GM12878 (cell line): ENCODE measurements at regions of chr14 and their contacts with region 1.

Region 1: DNA sequence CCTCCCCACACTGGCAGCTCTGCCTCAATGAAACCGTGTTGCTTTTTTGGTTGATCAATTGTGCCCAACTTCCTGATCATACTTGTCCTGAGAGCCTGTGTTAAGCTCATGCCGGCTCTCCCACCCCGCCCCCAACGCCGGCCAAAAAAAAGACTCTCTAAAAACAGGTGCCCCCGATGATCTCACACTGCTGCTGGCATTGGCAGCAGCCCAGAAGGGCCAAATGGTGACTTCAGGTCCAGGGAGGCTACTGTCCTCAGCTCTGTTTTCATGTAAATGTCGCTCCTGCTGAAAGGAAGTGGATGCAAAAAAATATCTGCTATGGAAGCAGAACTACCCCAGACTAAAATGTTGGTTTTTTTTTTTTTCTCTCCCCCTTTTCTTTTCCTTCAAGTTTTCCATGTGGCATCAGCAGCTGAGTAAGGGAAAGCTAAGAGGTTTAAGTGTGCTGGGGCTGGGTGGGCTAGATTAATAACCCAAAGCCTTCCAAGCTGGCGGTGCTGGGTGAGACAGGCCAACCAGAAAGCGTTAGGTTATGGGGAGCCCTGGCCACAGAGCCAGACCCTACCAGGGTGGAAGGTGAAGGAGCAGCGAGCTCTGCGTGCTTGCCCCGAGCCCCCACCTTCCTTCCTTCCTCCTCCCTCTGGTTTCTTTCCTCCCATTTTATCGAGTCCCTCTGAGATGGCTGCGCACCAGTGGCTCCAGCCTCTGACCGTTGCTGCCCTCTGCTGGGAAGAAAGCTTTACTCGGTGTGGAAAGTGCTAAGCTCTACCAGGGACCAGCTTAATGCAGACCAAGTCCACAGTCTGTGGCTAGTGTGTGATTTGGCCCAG is 396.1 kb downstream of the NRXN3 start:
- DNase-seq: peak; percentile 25
- ATAC-seq: peak; percentile 100
- H3K4me3 ChIP-seq: no peak overlapping the region
- H3K27ac ChIP-seq: no peak overlapping the region
- H3K4me1 ChIP-seq: no peaks in the 10 kb centered on the region
- H3K27me3 ChIP-seq: no peaks in the 10 kb centered on the region
- CTCF ChIP-seq: peak; percentile 77 to 84 (median 84)
- EP300 ChIP-seq: no peak
- POLR2A ChIP-seq: no peak
- RAD21 ChIP-seq: peak; percentile 88

Region 2: DNA sequence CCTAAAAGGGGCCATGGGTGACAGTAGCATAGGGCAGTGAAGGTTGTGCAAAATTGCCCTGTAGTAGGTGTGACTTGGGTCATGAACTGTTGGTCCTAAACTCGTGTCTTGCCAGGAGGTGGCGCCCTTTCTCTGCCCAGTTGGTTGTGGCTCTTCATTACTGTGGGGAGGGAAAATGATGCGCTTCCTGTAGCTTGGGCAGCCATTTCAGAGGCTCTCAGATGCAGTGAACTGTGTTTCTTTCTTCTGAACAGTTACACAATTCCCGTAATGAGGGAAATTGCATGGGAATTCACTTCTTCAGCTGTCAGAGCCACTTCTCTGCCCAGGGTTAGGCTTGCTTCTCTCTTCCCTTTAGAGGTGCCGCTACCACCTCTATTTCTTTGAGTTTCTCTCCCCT is 544.2 kb before region 1 on chr14:
- CTCF ChIA-PET with region 1: interaction called, 9 read pairs
- POLR2A ChIA-PET with region 1: no interaction called
- RAD21 ChIA-PET with region 1: interaction called, 15 read pairs
- SMC1A ChIA-PET with region 1: interaction called, 7 read pairs
- in situ Hi-C with region 1: no loop called
- intact Hi-C with region 1: loop called (anchors 2 kb)
- DNase-seq: peak; percentile 25
- ATAC-seq: peak; percentile 95
- H3K4me3 ChIP-seq: no peak overlapping the region
- H3K27ac ChIP-seq: no peak overlapping the region
- H3K4me1 ChIP-seq: no peaks in the 10 kb centered on the region
- H3K27me3 ChIP-seq: no peaks in the 10 kb centered on the region; a peak in 1 of 4 replicates
- CTCF ChIP-seq: peak; percentile 49 to 60 (median 53)
- EP300 ChIP-seq: no peak
- POLR2A ChIP-seq: no peak
- RAD21 ChIP-seq: peak; percentile 72

Region 3: DNA sequence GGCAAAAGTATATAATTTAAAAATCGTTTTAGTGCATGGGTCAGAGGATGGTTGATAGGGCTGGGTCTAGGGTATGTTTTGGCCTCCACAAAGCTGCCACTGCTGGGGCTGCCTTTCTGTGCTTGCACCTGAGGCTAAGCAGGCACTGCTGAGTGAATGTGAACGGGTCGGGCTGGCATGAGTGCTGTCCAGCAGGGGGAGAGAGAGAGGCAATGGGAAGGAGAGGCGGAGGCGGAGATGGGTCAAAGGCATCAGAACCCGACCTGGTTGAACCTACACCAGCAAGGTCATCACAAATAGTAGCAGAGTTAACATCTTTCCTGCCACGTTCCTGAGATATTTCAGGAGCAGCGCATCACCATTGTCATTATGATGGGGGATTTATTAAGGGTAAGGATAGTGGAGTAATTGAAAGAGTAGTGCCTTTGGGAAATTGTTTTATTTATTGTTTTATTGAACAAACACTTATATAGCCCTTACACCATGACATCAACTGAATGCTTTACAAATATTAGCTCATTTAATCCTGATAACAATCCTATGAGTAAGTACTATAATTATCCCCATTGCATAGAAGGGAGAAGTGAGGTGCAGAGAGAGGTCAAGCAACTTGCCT is 401.9 kb before region 1 on chr14:
- CTCF ChIA-PET with region 1: interaction called, 3 read pairs
- POLR2A ChIA-PET with region 1: no interaction called
- RAD21 ChIA-PET with region 1: no interaction called
- SMC1A ChIA-PET with region 1: no interaction called
- in situ Hi-C with region 1: no loop called
- intact Hi-C with region 1: loop called (anchors 10 kb)
- DNase-seq: no peak
- ATAC-seq: peak; percentile 85
- H3K4me3 ChIP-seq: no peak overlapping the region
- H3K27ac ChIP-seq: no peak overlapping the region
- H3K4me1 ChIP-seq: no peaks in the 10 kb centered on the region
- H3K27me3 ChIP-seq: peaks cover 2 to 3% of the 10 kb centered on the region in 2 experiments; a peak in 2 of 4 replicates
- CTCF ChIP-seq: peak; percentile 45 to 79 (median 71)
- EP300 ChIP-seq: no peak
- POLR2A ChIP-seq: no peak
- RAD21 ChIP-seq: peak; percentile 44

Region 4: GRCh38 chr14:78403278-78403815 is 162.9 kb before region 1 on chr14:
- CTCF ChIA-PET with region 1: no interaction called
- POLR2A ChIA-PET with region 1: no interaction called
- RAD21 ChIA-PET with region 1: no interaction called
- SMC1A ChIA-PET with region 1: no interaction called
- in situ Hi-C with region 1: no loop called
- intact Hi-C with region 1: no loop called
- DNase-seq: peak; percentile 83
- ATAC-seq: peak; percentile 82
- H3K4me3 ChIP-seq: peak overlapping the region; percentile 70
- H3K27ac ChIP-seq: no peak overlapping the region; the same call in 1 of the 2 replicates
- H3K4me1 ChIP-seq: no peaks in the 10 kb centered on the region
- H3K27me3 ChIP-seq: no peaks in the 10 kb centered on the region
- CTCF ChIP-seq: no peak
- EP300 ChIP-seq: no peak
- POLR2A ChIP-seq: no peak
- RAD21 ChIP-seq: peak; percentile 7; the same call in 1 of the 2 replicates

Region 5: DNA sequence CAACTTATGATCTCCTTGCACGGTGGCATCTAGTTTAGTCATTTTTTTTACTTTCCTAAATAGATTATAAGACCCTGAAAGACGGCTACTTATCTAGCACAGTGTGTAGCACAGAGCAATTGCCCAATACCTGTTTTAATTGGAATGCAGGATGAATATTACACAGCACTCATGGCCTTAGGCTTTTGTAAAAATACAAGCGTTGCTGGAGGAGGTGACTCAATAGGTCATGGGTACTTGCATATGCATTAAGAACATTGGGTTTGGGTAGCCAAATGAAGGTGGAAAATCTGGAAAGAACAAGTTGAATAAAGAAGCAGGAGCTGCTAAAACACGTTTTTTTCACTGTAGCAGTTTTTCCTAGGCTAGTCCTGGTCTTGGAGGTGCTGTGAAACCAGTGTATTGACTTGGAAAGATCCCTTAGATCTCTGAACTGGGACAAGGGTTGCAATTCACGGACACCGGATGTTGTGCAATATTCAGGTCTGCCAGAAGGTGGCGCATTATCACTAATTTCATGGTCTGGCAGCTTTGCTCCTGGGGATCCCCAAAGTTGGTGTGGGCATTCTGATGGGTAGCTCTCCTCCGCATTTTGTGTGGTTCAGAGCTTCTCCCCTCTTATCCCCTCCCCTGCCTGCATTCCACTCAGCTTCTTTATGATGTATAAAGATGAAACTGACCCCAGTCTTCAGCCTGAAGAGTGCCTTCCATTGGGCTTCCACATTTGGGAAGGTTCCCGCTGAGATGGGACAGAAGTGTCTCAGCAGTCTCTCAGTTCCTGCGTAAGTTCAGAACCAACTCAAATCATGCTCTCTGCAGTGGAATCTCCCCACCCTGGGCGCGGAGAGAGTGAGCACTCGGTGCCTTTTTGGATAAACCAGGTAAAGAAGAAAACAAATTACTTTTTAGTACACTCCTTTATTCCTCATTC is 117.8 kb before region 1 on chr14:
- CTCF ChIA-PET with region 1: interaction called, 39 read pairs
- POLR2A ChIA-PET with region 1: no interaction called
- RAD21 ChIA-PET with region 1: interaction called, 14 read pairs
- SMC1A ChIA-PET with region 1: interaction called, 12 read pairs
- in situ Hi-C with region 1: loop called (anchors 5 kb)
- intact Hi-C with region 1: loop called (anchors 1 kb)
- DNase-seq: peak; percentile 45
- ATAC-seq: peak; percentile 87
- H3K4me3 ChIP-seq: no peak overlapping the region
- H3K27ac ChIP-seq: no peak overlapping the region
- H3K4me1 ChIP-seq: peaks cover 5% of the 10 kb centered on the region
- H3K27me3 ChIP-seq: no peaks in the 10 kb centered on the region
- CTCF ChIP-seq: peak; percentile 68 to 91 (median 89)
- EP300 ChIP-seq: no peak
- POLR2A ChIP-seq: no peak
- RAD21 ChIP-seq: peak; percentile 73

Region 6: GRCh38 chr14:78543433-78543832 is 22.8 kb before region 1 on chr14:
- CTCF ChIA-PET with region 1: interaction called, 11 read pairs
- POLR2A ChIA-PET with region 1: no interaction called
- RAD21 ChIA-PET with region 1: no interaction called
- SMC1A ChIA-PET with region 1: no interaction called
- in situ Hi-C with region 1: no loop called
- intact Hi-C with region 1: no loop called
- DNase-seq: no peak
- ATAC-seq: no peak
- H3K4me3 ChIP-seq: no peak overlapping the region
- H3K27ac ChIP-seq: no peak overlapping the region
- H3K4me1 ChIP-seq: no peaks in the 10 kb centered on the region
- H3K27me3 ChIP-seq: no peaks in the 10 kb centered on the region
- CTCF ChIP-seq: no peak
- EP300 ChIP-seq: no peak
- POLR2A ChIP-seq: no peak
- RAD21 ChIP-seq: no peak

Region 7: DNA sequence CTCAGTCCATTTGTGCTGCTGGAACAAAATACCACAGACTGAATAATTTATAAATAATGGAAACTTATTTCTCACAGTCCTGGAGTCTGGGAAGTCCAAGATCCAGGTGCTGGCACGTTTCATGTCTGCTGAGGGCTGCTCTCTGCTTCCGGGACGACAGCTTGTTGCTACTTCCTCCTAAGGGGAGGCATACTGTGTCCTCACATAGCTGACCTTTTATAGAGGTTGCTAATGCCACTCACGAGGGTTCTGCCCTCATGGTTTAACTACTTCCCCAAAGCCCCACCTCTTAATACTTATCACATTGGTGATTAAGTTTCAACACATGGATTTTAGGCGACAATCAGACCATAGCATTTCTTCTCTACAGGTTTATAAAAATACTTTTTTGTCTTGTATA is 15.0 kb after region 1 on chr14:
- CTCF ChIA-PET with region 1: interaction called, 11 read pairs
- POLR2A ChIA-PET with region 1: no interaction called
- RAD21 ChIA-PET with region 1: no interaction called
- SMC1A ChIA-PET with region 1: interaction called, 6 read pairs
- in situ Hi-C with region 1: no loop called
- intact Hi-C with region 1: no loop called
- DNase-seq: no peak
- ATAC-seq: no peak
- H3K4me3 ChIP-seq: no peak overlapping the region
- H3K27ac ChIP-seq: no peak overlapping the region
- H3K4me1 ChIP-seq: no peaks in the 10 kb centered on the region
- H3K27me3 ChIP-seq: no peaks in the 10 kb centered on the region
- CTCF ChIP-seq: no peak
- EP300 ChIP-seq: no peak
- POLR2A ChIP-seq: no peak
- RAD21 ChIP-seq: no peak

Region 8: GRCh38 chr14:78598041-78598920 is 32.0 kb after region 1 on chr14:
- CTCF ChIA-PET with region 1: interaction called, 11 read pairs
- POLR2A ChIA-PET with region 1: no interaction called
- RAD21 ChIA-PET with region 1: interaction called, 3 read pairs
- SMC1A ChIA-PET with region 1: no interaction called
- in situ Hi-C with region 1: no loop called
- intact Hi-C with region 1: no loop called
- DNase-seq: no peak
- ATAC-seq: peak; percentile 99
- H3K4me3 ChIP-seq: no peak overlapping the region
- H3K27ac ChIP-seq: no peak overlapping the region
- H3K4me1 ChIP-seq: no peaks in the 10 kb centered on the region
- H3K27me3 ChIP-seq: no peaks in the 10 kb centered on the region
- CTCF ChIP-seq: peak; percentile 94 to 96 (median 94)
- EP300 ChIP-seq: no peak
- POLR2A ChIP-seq: no peak
- RAD21 ChIP-seq: peak; percentile 87